Psoas muscle (tissue), 8 donors: ENCODE measurements at regions of chr2 and their contacts with region 1.

Region 1: GRCh38 chr2:36355151-36355889 is at the start of gene CRIM1:
- DNase-seq: peak; percentile 90 to 95
- ATAC-seq: peak; percentile 71 to 83 (median 78)
- H3K4me3 ChIP-seq: peak within 1 kb of the TSS; percentile 95
- H3K27ac ChIP-seq: peak within 1 kb of the TSS; percentile 92
- H3K4me1 ChIP-seq: peaks cover 27% of the 10 kb centered on the region
- H3K27me3 ChIP-seq: no peaks in the 10 kb centered on the region
- CTCF ChIP-seq: no peak
- total RNA-seq, gene CRIM1: 49.8 to 66.2 (median 56.3) TPM

Region 2: GRCh38 chr2:36450466-36451196 is 95.3 kb after region 1 on chr2:
- intact Hi-C with region 1: loop called (anchors 5 kb)
- DNase-seq: no peak
- ATAC-seq: peak in 3 of 4 donors; percentile 67 to 75 (median 69)
- H3K4me3 ChIP-seq: no peak overlapping the region
- H3K27ac ChIP-seq: peak overlapping the region; percentile 75
- H3K4me1 ChIP-seq: peaks cover 94% of the 10 kb centered on the region
- H3K27me3 ChIP-seq: no peaks in the 10 kb centered on the region
- CTCF ChIP-seq: no peak

Region 3: GRCh38 chr2:36502081-36502480 is 146.8 kb after region 1 on chr2:
- intact Hi-C with region 1: loop called (anchors 5 kb)
- DNase-seq: no peak
- ATAC-seq: no peak
- H3K4me3 ChIP-seq: no peak overlapping the region
- H3K27ac ChIP-seq: no peak overlapping the region
- H3K4me1 ChIP-seq: peaks cover 9% of the 10 kb centered on the region
- H3K27me3 ChIP-seq: no peaks in the 10 kb centered on the region
- CTCF ChIP-seq: no peak

Region 4: GRCh38 chr2:36597532-36598377 is 242.4 kb after region 1 on chr2 and contains the start of gene FEZ2:
- intact Hi-C with region 1: loop called in 1 of 2 experiments (anchors 10 kb)
- DNase-seq: peak; percentile 81 to 91
- ATAC-seq: peak; percentile 92 to 96 (median 94)
- H3K4me3 ChIP-seq: peak within 1 kb of the TSS; percentile 99
- H3K27ac ChIP-seq: peak within 1 kb of the TSS; percentile 97
- H3K4me1 ChIP-seq: peaks cover 28% of the 10 kb centered on the region
- H3K27me3 ChIP-seq: no peaks in the 10 kb centered on the region
- CTCF ChIP-seq: no peak
- total RNA-seq, gene FEZ2: 61.5 to 291 (median 181) TPM

Region 5: DNA sequence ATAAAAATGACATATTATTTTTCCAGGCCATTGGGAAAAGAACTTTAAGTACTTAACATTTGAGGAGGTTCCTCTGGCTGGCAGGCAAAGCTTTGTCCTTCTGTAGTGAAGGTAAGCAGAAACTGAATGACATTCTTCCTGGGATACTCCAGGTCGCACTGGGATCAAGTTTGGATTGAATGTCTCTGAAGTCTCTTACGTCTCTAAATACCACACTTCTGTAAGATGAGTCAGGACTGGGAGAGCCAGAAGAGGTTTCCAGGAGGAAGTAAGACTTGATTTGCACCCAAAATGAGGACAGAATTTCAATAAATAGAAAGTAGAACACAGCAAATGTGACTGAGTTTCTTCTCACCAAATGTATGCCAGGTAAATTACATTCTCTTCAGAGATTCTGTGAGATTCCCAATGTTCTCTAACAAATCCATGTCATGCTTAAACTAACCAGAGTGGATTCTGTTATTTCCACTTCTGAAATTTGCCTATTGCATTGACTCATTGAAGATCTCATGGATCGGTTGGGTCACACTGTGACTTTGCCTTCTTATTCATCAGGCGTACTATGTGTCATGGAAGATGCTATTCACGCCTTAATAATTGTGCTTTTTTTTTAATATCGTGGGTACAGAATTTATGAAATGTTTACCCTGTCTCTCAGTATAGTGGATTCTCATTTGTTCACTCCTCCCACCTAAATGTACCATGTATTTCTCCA is 315.7 kb after region 1 on chr2:
- intact Hi-C with region 1: loop called in 1 of 2 experiments (anchors 2 kb)
- DNase-seq: no peak
- ATAC-seq: peak in 1 of 4 donors; percentile 43
- H3K4me3 ChIP-seq: no peak overlapping the region
- H3K27ac ChIP-seq: no peak overlapping the region
- H3K4me1 ChIP-seq: peaks cover 4% of the 10 kb centered on the region
- H3K27me3 ChIP-seq: no peaks in the 10 kb centered on the region
- CTCF ChIP-seq: no peak